ENCODE measurements at regions of chr22 and their contacts with region 1.

Region 1: DNA sequence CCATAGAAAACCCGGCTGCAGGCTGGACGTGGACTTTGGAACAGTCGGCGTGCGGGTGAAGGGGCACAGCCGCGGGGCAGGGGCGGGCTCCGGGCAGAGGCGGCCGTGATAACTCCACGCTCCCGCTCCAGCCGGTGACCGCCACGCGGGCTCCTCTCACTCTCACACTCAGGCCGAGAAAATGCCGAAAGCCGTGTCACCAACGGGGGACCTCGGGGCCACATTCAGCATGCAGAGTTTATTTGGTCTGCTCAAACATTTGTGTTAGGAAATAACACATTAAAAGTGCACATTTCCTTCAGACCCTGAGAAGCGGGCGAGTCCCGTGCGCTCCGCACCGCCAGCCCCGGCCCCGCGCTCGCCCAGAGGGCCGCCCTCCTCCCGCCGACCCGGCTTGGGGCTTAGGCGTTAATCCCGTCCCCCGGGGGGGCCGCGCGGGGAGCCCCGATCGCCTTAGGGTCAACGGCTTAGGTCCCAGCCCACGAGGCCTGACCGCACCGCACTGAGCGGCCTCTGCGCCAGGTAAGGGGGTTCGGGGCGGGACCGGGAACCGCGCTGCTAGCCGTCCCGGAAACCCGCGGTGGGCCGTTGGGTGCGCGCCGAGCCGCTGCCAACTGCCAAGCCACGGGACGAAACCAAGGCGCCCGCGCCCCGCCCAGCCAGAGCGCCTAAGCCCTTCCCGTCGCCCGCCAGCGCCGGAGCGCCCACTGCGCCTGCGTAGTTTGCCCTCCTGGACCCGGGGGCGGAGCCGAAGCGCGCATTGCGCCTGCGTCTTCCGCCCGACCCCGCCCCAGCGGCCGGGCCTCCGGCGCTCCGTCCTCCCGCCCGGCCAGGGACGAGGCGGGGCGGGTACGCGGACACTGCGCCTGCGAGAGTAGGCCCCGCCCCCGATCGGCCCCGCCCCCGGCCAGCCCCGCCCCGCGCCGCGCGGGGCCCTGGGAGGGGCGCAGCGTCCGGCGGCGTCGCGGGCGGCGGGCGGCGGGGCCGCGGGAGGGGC is at the start of gene ZBED4:
- DNase-seq: peak; percentile 97
- H3K4me3 ChIP-seq: peak within 1 kb of the TSS; percentile 64 to 90 (median 81)
- H3K27ac ChIP-seq: peak within 1 kb of the TSS; percentile 68
- H3K4me1 ChIP-seq: peaks cover 21% of the 10 kb centered on the region
- H3K27me3 ChIP-seq: peaks cover 24% of the 10 kb centered on the region
- CTCF ChIP-seq: no peak
- total RNA-seq, gene ZBED4: 16.8 to 20.7 TPM

Region 2: GRCh38 chr22:49827853-49828598 is 25.2 kb before region 1 on chr22 and contains the start of gene BRD1:
- CTCF ChIA-PET with region 1: no interaction called
- dilution Hi-C with region 1: no loop called
- in situ Hi-C with region 1: no loop called
- intact Hi-C with region 1: loop called (anchors 2 kb)
- DNase-seq: peak; percentile 49
- H3K4me3 ChIP-seq: peak within 1 kb of the TSS; percentile 66 to 91 (median 75)
- H3K27ac ChIP-seq: peak within 1 kb of the TSS; percentile 77
- H3K4me1 ChIP-seq: peaks cover 25% of the 10 kb centered on the region
- H3K27me3 ChIP-seq: no peaks in the 10 kb centered on the region
- CTCF ChIP-seq: no peak
- total RNA-seq, gene BRD1: 25.5 to 26.9 TPM

Region 3: DNA sequence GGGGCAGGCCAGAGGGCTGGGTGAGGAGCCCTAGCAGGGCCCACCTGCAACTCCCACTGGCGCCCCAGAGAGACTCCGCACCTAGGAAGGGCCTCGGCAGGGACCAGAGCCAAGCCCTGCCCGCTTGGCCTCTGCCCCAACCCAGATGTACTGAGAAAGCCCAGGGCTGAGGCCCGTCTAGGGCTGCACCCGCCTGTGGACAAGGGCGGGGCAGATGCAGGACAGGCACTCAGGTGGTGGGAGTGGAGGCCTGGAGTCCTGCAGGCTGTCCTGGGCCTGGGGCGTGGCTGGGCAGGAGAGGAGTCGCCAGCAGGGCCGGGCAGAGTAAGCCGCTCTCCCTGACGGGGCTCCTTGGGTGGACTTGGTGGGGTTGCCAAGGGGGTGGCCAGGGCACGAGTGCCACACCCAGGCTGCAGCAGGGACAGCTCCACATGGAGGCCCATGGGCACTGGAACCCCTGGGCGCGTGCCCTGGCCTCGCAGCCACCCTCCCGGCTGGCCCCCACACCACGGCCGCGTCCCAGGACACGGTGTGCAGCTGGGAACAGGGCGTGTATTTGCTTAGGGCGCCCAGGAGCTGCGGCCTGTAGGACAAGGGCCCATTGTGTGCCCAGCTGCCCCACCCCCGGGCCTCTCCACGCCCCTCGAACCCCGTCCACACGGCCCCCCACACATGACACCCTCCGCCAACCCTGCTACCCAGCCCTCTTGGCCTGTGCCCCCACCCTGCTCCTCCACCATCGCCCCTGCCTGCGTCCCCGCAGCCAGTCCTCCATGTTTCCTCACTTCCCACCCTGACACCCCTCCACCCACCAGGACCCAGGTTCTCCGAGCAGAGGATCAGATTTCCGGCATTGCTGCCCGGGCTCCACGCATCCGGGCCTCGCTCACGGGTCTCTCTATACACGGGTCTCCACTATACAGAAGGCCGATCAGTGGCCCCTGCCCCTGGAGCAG is 96.0 kb after region 1 on chr22:
- CTCF ChIA-PET with region 1: no interaction called
- dilution Hi-C with region 1: no loop called
- in situ Hi-C with region 1: no loop called
- intact Hi-C with region 1: no loop called
- DNase-seq: peak; percentile 50
- H3K4me3 ChIP-seq: peak overlapping the region in 1 of 3 experiments; percentile 41
- H3K27ac ChIP-seq: peak overlapping the region; percentile 50
- H3K4me1 ChIP-seq: peaks cover 80% of the 10 kb centered on the region
- H3K27me3 ChIP-seq: no peaks in the 10 kb centered on the region
- CTCF ChIP-seq: no peak